Ascending aorta (tissue), 2 donors: ENCODE measurements at regions of chr20 and their contacts with region 1.

Region 1: DNA sequence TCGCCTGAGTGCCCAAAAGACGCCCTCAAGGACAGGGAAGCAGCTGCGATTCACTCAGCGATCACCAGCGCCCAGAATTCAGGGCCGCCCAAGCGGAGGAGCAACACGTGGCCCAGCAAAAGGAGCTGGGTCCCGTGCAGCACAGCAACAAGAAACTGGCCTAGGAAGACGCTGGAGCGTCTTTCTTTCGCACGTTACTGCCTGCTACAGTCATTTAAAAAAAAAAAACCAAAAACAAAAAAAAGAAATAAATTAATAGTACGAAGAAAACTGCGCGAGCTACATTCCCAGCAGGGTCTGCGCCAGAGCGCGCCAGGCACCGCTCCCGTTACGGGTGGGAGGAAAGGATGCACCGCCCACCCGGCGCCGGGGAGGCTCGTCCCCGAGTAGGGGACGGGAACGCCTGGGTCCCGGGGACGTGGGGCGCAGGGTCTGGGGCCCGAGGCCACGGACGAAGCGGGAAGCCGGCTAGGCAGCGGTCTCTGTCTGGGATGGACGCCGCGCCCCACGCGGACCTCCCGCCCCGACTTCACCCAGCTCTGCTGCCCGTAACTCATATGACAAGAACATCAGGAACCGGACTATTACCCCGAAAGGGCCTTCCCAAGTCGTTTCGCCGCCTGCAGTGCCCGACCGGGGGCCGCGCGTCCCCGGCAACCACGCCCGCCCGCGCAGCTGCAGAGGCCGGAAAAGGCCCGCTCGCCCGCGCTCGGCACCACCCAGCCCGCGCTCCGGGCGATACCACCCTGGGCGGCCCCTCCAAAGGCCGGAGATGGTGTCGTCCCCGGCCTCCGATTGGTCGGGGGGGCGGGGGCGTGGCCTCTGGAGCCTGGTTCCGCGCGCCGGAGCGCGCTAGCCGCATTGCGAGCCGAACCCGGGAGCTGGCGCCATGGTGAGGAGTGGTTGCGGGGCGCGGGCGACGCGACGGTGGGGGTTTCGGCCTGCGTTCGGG is at the start of gene NOP56:
- DNase-seq: peak; percentile 48 to 94
- H3K4me3 ChIP-seq: peak within 1 kb of the TSS; percentile 69 to 87
- H3K27ac ChIP-seq: peak within 1 kb of the TSS; percentile 81 to 82
- H3K4me1 ChIP-seq: peaks cover 9 to 15% of the 10 kb centered on the region in 2 donors
- H3K27me3 ChIP-seq: no peaks in the 10 kb centered on the region
- CTCF ChIP-seq: no peak
- total RNA-seq, gene NOP56: 32.1 TPM

Region 2: DNA sequence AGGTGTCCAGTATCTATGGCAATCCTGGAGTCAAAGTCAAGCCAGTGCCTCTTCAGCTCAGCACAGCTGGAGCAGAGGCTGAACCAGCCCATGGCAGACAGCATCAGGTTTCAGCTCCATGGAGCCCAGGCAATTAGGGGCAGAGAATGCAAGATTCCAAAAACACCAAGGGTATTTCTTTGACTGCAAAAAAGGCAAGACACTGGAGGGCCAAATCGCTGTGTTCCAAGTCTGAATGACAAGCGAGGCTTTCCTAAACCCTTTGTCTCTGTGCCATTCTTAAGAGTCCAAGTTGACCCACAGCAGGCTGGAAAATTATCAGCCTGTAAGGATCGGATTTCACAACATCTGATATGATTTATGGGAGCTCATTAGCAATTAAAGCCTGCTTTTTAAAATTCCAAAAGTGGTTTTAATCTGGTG is 406.0 kb before region 1 on chr20:
- intact Hi-C with region 1: no loop called
- DNase-seq: no peak
- H3K4me3 ChIP-seq: no peak overlapping the region
- H3K27ac ChIP-seq: no peak overlapping the region
- H3K4me1 ChIP-seq: no peaks in the 10 kb centered on the region
- H3K27me3 ChIP-seq: no peaks in the 10 kb centered on the region
- CTCF ChIP-seq: no peak

Region 3: DNA sequence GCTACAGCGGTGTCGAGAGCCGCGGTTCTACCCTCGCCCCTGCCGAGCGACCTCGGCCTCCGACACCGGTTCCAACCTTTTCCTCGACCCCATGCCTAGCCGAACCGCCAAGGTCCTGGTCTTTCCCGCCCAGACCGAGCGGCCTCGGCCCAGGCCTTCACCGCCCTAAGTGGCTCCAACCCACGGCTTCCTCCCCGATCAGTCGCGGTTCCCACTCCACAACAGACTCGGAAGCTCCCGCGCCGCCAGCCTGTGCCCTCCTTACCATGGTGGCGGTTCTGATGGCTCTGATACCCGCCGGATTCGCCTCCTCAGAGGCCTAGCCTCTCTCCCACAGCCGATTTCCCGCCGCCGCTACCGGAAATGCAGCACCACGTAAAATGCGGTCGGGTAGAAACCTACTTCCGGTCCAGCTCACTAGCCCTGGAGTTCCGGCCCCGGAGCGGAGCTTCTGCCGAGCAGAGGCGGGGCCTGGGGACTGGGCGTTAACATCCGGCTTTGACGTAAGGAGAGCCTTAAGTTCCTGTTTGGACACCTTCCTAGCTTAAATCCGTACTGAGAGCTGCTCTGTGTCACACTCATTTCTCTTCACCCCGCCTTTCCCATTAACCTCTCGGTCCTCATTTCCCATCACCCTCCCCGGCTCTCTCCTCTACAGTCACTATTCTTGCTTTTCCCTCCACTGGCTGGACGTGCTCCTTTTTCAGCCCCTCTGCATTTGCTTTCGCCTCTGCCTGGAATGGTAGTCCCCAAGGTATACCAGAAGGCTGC is 181.4 kb before region 1 on chr20 and contains the start of gene SNRPB:
- intact Hi-C with region 1: loop called (anchors 5 kb)
- DNase-seq: peak; percentile 88 to 99
- H3K4me3 ChIP-seq: peak within 1 kb of the TSS; percentile 76 to 81
- H3K27ac ChIP-seq: peak within 1 kb of the TSS; percentile 94 to 96
- H3K4me1 ChIP-seq: peaks cover 4 to 18% of the 10 kb centered on the region in 2 donors
- H3K27me3 ChIP-seq: no peaks in the 10 kb centered on the region
- CTCF ChIP-seq: no peak
- total RNA-seq, gene SNRPB: 83.5 TPM

Region 4: DNA sequence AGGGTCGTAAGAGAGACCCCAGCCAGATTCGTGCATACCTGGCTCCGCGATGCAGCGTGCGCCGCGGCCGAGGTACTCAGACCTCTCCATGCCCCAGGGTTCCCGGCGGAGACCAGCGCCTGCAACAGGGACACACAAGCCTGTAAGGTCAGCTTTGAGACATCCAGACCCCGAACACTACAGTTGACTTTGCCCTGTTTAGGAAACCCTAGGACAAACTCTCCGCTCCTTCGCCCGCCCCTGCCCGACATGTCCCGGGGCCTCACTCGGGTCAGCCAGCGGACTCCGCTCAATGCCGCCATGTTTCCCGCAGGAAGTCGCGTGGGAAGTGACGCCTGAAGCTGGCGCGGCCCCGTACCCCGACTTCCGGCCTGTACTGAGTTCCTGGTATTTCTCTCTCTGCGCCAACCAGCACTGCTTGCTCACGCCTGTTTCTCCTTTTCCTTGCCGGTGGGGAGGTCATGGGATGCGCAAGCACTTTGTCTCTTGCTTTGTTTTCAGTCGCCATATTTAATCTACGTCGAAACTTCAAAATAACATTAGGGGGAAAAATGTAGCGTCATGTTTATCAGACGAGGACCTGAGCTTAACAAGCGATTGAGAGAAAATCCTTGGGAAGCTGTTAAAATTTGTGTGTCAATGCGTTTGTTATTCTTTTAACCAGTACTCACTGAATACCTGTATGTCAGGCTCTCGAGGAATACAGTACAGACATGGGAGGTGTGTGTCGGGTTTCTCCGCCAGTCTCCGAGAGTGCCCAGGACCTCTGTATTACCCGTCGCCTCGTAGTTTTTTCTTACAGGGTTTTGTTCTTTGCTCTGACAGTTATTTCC is 12.1 kb after region 1 on chr20 and contains the start of gene IDH3B:
- intact Hi-C with region 1: loop called (anchors 1 kb)
- DNase-seq: peak; percentile 80 to 97
- H3K4me3 ChIP-seq: peak within 1 kb of the TSS; percentile 77 to 81
- H3K27ac ChIP-seq: peak within 1 kb of the TSS; percentile 82 to 86
- H3K4me1 ChIP-seq: peaks cover 3 to 10% of the 10 kb centered on the region in 2 donors
- H3K27me3 ChIP-seq: no peaks in the 10 kb centered on the region
- CTCF ChIP-seq: no peak
- total RNA-seq, gene IDH3B: 24.9 TPM

Region 5: GRCh38 chr20:2840138-2840966 is 188.3 kb after region 1 on chr20 and contains the starts of genes PCED1A and VPS16:
- intact Hi-C with region 1: loop called (anchors 5 kb)
- DNase-seq: peak; percentile 37 to 92
- H3K4me3 ChIP-seq: peak within 1 kb of the TSS; percentile 73 to 87
- H3K27ac ChIP-seq: peak within 1 kb of the TSS; percentile 86 to 89
- H3K4me1 ChIP-seq: peaks cover 5% of the 10 kb centered on the region in 2 donors
- H3K27me3 ChIP-seq: no peaks in the 10 kb centered on the region
- CTCF ChIP-seq: no peak
- total RNA-seq, gene PCED1A: 49.7 TPM
- total RNA-seq, gene VPS16: 61.1 TPM

Region 6: GRCh38 chr20:3000852-3001523 is 348.9 kb after region 1 on chr20:
- intact Hi-C with region 1: loop called (anchors 10 kb)
- DNase-seq: no peak
- H3K4me3 ChIP-seq: no peak overlapping the region
- H3K27ac ChIP-seq: no peak overlapping the region
- H3K4me1 ChIP-seq: no peaks in the 10 kb centered on the region
- H3K27me3 ChIP-seq: no peaks in the 10 kb centered on the region
- CTCF ChIP-seq: peak in 2 of 3 experiments; percentile 34 to 36